ENCODE measurements at regions of chr6 and their contacts with region 1.

Region 1: DNA sequence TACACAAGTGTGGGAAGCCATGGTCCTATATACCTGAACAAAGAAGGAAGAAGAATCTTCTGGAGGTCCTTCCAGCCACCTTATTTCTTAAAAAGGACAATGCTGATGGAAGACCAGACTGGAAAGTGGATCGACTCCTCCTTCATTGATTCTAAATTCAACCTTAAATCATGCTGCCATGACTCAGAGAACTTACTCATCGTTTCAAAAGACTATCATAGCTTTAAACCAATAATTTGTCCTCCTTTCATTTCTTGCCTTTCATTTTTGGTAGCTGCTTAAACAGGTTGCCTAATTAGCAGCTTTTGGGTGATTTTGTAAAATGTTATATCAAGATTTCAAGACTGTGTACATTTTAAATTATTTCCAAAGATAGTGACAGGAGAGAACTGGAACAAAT is 60.8 kb downstream of the RTN4IP1 start:
- DNase-seq: no peak
- ATAC-seq: no peak

Region 2: GRCh38 chr6:105667056-105667455 is 901.5 kb before region 1 on chr6:
- intact Hi-C with region 1: no loop called
- DNase-seq: no peak
- ATAC-seq: no peak

Region 3: DNA sequence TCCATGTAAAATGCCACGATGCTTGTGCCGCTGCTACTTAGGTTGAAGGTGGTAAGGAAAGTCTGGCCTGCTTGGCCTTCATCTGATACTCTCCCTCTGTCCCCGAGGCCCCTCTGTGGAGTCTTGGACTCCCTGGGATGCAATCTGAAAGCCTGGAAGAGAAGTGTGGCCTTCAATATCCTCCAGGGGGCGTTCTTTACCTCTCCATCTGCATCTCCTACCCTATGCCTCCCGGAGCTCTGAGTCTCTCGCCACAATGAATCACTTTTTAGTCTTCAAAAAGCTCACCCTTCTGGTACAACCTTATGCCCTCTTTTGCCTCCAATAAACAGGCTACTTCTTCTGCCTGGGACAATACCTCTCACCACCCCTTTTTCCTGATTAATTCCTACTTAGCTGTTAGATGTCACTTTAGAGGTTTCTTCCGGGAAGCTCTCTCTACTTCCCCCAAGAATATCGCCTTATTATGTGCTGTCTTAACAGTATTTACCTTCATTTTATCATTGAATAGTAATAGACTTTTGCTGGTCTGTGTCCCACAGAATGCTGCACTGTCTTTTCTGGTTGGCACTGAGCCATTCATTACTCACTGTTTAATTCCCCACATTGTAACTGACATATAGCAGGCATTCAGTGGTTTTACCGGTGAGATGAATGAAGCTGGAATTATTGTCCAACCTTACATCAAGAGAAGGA is 229.0 kb before region 1 on chr6:
- intact Hi-C with region 1: loop called in 1 of 2 experiments (anchors 5 kb)
- DNase-seq: peak; percentile 42 to 44
- ATAC-seq: peak; percentile 90

Region 4: DNA sequence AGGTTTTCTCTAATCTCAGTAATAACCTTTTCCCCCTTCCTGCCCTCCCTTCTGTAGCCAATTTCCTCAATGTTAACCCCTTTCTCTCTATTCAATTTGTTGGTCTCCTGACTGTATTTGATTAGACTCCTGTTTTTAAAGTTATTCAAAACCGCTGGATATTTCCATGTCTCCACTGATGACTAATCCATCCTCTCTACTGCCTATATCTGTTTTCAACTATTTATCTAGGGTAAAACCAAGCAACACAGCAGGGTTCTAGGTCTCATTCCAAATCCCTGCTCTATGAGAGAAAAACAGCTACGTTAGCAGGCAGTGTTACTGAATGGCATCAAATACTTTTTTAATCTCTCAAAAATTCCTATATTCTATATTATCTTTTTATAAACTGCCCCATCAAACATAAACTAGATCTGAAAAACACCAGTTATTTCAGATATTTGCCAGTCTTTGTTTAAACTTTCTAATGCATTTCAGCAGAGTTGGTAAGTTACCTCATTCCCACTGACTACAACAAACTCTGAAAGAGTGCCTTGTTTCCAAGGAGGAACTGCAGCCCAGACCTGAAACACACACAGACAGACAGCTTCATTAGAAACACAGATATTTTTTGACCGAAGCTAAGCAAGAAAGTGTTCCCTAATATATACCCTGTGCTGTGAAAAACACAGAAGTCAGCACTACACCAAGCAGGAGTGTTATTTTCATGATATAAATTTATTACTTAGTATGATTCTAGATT is 52.6 kb after region 1 on chr6:
- intact Hi-C with region 1: no loop called
- DNase-seq: no peak
- ATAC-seq: no peak

Measured in left colon (tissue), 2 donors.